Activated naive CD4-positive, alpha-beta T cell treated with anti-CD3 and anti-CD28 coated beads, Interleukin-2, amount 10 ng/mL, durations not matched to agents 7 days and 5 days (primary cell): ENCODE measurements at regions of chr1 and their contacts with region 1.

Region 1: DNA sequence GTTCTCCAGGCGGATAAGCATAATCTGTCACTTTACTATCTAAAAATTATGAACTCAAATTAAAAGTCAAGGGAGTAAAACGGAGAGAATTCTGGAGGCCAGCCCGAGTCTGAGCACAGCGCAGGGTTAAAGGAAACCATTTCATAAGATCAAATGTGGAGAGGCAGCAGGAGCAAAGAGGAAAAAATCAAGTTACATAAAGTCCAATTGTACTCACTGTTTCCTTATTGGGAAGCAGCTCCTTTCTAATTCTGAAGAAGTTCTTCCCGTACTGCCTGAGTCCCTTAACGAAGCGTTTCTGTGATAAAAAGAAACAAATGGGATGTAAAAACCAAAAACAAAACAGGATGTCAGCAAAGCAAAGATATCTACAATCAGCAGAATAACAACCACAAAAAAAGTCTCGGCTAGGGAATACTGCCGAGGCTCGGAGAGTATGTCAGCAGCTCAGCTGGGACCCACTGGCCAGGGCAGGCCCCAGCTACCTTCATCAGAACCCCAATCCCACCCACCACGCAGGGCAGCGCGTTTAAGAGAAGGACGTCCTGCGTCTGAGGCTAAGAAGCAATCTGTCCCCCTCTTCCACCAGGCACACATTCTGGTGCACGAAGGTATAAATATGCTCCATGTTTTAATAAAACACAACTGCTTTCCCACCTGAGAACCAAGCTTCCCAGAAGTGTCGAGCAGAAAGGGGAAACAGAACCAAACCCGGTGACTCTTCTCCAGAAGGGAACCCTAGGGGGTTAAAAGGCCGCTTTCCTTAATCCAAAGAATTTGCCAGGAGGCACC is 104.8 kb downstream of the SLC45A1 start:
- DNase-seq: no peak
- H3K4me3 Mint-ChIP-seq: no peak overlapping the region
- H3K27ac Mint-ChIP-seq: no peak overlapping the region
- H3K4me1 Mint-ChIP-seq: peaks cover 36% of the 10 kb centered on the region
- H3K27me3 Mint-ChIP-seq: no peaks in the 10 kb centered on the region

Region 2: GRCh38 chr1:8348777-8349491 is 73.8 kb before region 1 on chr1:
- CTCF ChIA-PET with region 1: no interaction called
- DNase-seq: peak; percentile 78
- H3K4me3 Mint-ChIP-seq: no peak overlapping the region
- H3K27ac Mint-ChIP-seq: no peak overlapping the region
- H3K4me1 Mint-ChIP-seq: no peaks in the 10 kb centered on the region
- H3K27me3 Mint-ChIP-seq: peaks cover 13% of the 10 kb centered on the region

Region 3: DNA sequence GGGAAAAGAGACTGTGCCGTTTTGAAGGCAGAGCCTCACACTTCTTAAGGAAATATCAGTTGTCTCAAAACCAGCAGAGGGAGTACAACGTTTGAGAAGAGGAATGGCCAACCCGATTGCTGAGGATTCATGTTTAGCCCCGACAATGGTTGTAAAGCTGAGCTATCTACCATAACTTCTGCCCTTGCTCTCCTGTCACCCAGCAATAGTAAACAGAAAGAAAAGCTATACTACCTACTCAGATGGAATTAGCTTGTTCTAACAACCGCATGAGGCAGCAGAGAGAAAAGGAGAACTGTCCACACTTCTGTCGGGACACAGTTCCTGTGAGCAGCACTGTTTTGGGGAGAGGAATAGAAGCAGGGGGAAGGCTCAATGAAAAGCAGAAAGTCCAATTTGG is 13.6 kb before region 1 on chr1:
- CTCF ChIA-PET with region 1: interaction called, 25 read pairs
- DNase-seq: no peak
- H3K4me3 Mint-ChIP-seq: peak overlapping the region; percentile 2
- H3K27ac Mint-ChIP-seq: peak overlapping the region; percentile 89
- H3K4me1 Mint-ChIP-seq: peaks cover 65% of the 10 kb centered on the region
- H3K27me3 Mint-ChIP-seq: no peaks in the 10 kb centered on the region